Panc1 (cell line): ENCODE measurements at regions of chr2 and their contacts with region 1.

Region 1: DNA sequence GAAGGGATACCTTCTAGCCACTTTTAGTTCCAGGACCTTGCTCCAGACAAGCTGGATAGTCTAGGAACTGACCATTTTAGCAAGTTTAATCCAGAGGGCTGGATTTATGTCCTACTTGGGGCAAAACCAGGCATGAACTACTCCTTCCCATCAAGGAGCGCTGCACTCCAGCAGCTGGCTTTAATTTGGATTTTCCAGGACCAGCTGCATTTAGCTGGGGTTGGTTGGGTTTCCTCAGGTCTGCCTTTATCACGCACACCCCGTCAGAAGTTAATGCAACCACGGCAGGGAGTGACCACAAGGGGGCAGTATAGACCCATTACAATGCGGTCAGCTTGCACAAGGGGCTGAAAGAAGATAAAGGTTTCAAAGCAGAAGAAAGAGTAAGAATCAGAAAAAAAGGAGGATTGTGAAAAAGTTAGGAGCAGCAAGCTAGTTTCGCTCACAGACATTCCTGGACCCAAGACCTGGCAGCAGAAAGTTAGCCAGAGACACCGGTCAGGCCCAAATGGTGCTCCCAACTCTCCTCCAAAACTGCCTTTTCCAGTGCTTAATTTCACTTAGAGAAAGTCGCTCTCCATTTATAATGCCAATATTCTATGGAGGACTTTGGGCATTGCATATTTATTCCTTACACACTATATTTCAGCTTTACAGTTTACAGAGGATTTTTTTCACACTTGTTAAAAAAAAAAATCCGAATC is 40.1 kb downstream of the SLC4A1AP start:
- DNase-seq: no peak
- ATAC-seq: peak; percentile 86
- H3K4me3 ChIP-seq: no peak overlapping the region
- H3K27ac ChIP-seq: no peak overlapping the region
- H3K4me1 ChIP-seq: peaks cover 9% of the 10 kb centered on the region; the same call in 1 of the 2 replicates
- H3K27me3 ChIP-seq: no peaks in the 10 kb centered on the region
- CTCF ChIP-seq: peak; percentile 91

Region 2: DNA sequence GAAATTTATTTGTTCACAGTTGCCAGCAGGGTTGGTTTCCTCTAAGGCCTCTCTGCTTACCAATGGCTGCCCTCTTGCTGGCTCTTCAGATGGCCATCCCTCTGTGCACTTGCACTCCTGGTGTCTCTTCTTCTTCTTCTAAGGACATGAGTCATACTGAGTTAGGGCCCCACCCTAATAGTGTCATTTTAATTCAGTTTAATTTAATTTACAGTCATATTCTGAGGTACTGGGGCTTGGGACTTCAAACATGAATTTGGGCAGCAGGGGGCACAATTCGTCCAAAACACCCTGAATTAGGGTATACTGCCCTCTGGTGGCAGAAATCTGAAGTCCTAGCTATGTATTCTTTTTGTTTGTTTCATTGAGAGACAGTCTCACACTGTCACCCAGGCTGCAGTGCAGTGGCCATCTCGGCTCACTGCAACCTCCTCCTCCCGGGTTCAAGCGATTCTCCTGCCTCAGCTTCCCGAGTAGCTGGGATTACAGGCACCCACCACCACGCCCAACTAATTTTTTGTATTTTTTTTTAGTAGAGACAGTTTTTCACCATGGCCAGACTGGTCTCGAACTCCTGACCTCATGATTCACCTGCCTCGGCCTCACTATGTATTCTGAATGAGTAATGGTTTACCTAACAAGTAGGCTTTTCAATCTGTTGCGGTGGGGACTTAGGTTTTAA is 20.3 kb before region 1 on chr2:
- CTCF ChIA-PET with region 1: interaction called, 10 read pairs
- POLR2A ChIA-PET with region 1: no interaction called
- in situ Hi-C with region 1: no loop called
- intact Hi-C with region 1: no loop called
- DNase-seq: peak; percentile 93
- ATAC-seq: peak; percentile 92
- H3K4me3 ChIP-seq: no peak overlapping the region
- H3K27ac ChIP-seq: no peak overlapping the region
- H3K4me1 ChIP-seq: no peaks in the 10 kb centered on the region
- H3K27me3 ChIP-seq: no peaks in the 10 kb centered on the region
- CTCF ChIP-seq: peak; percentile 98

Region 3: DNA sequence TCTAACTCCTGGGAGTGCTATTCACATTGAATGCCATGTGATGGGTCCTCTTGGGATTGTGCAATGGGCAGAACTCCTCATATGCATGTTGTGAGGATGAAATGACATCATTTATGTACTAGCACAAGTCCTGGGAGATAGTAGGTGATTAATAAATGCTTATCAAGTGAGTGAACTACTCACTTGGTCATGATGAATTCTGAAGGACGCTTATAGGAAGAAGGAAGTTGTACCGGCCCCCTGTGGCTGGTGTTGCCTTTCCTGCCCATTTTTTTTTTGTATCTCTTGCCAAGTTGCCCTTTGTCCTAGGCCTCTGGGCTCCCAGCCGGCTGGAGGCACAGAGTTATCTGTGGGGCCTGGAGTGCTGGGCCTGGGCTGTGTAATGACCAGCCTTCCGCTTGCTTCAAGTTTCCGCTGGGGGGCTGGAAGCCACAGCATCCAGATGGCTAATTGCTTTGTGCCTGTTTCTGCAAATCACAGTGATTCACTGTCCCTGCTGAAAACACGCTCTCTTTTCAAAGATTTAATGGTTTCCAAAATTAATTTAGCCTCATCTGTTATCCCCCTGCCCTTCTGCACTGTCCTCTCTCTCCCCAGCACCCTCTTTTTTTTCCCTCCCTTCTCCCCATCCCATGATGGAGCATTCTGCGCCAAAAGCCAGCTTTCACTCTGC is 34.0 kb after region 1 on chr2:
- CTCF ChIA-PET with region 1: interaction called, 6 read pairs
- POLR2A ChIA-PET with region 1: interaction called, 11 read pairs
- in situ Hi-C with region 1: no loop called
- intact Hi-C with region 1: no loop called
- DNase-seq: no peak
- ATAC-seq: no peak
- H3K4me3 ChIP-seq: no peak overlapping the region
- H3K27ac ChIP-seq: no peak overlapping the region
- H3K4me1 ChIP-seq: peaks cover 4% of the 10 kb centered on the region; the same call in 1 of the 2 replicates
- H3K27me3 ChIP-seq: no peaks in the 10 kb centered on the region
- CTCF ChIP-seq: no peak